Aorta (tissue), 5 donors: ENCODE measurements at regions of chr15 and their contacts with region 1.

Region 1: DNA sequence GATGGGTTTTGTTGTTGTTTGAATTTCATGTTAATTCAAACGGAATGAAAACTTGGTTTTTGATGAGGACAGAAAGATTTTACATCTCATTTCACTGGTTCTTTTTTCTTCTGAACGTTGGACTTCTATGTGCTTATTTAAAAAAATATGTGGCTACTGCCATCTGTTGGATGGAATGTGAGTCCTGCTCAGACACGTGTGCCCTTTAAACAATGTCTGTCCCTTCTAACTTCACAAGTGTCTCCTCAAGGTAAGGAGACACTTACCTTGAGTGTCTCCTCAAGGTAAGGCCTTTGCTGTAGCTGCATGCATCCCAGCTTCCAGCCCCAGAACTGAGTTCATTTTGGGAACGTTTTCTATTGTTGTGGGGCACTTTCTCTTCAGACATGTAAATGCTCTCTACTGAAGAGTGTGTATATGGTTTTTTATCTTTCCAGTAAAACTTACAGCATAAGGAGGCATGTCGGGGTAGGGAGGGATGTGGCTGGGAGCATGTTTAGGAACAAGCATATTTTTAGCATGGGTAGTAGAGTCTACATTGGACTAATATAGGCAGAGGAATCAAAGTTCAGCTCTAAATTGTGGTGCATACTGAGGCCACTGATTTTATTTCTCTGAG is 63.1 kb upstream of the UBE3A start:
- DNase-seq: no peak
- ATAC-seq: peak; percentile 72
- H3K4me3 ChIP-seq: no peak overlapping the region
- H3K27ac ChIP-seq: no peak overlapping the region
- H3K4me1 ChIP-seq: peaks cover 0 to 3% of the 10 kb centered on the region in 2 donors
- H3K27me3 ChIP-seq: no peaks in the 10 kb centered on the region

Region 2: GRCh38 chr15:24933716-24934115 is 568.2 kb before region 1 on chr15:
- intact Hi-C with region 1: no loop called
- DNase-seq: no peak
- ATAC-seq: no peak
- H3K4me3 ChIP-seq: no peak overlapping the region
- H3K27ac ChIP-seq: peak overlapping the region in 1 of 2 donors; percentile 39
- H3K4me1 ChIP-seq: no peaks in the 10 kb centered on the region
- H3K27me3 ChIP-seq: no peaks in the 10 kb centered on the region

Region 3: GRCh38 chr15:25136119-25136518 is 365.8 kb before region 1 on chr15:
- intact Hi-C with region 1: loop called in 1 of 2 experiments (anchors 10 kb)
- DNase-seq: no peak
- ATAC-seq: no peak
- H3K4me3 ChIP-seq: no peak overlapping the region
- H3K27ac ChIP-seq: no peak overlapping the region
- H3K4me1 ChIP-seq: no peaks in the 10 kb centered on the region
- H3K27me3 ChIP-seq: no peaks in the 10 kb centered on the region